ENCODE measurements at regions of chr1 and their contacts with region 1.

Region 1: DNA sequence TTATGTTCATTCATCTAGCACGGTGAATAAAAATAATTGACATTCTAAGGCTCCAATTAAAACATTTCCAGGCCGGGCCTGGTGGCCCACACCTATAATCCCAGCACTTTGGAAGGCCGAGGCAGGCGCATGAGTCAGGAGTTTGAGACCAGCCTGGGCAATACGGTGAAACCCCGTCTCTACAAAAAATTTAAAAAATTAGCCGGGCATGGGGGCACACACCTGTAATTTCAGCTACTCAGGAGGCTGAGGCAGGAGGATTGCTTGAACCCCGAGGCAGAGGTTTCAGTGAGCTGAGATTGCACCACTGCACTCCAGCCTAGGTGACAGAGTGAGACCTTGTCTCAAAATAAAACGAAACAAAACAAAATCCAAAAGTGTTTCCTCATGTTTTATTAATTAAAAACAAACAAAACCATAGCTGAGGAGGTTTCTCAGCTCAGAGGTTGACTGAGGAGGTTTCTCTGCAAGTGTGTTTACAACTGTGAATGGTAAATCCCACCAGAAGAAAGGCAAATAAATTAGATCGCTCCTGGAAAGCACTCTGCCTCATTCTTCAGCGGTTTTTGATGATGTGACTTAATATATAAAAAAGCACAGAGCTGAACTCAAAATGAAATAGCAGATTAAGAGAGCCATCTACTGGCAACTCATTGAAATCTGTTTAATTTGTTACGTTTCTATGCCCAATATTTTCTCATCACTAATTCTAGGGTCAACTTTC is 37.7 kb upstream of the ATG4C start:
- DNase-seq: no peak
- ATAC-seq: no peak
- H3K4me3 Mint-ChIP-seq: no peak overlapping the region
- H3K27ac Mint-ChIP-seq: no peak overlapping the region
- H3K4me1 Mint-ChIP-seq: no peaks in the 10 kb centered on the region
- H3K27me3 Mint-ChIP-seq: peaks cover 19% of the 10 kb centered on the region

Region 2: GRCh38 chr1:62175568-62176179 is 570.6 kb before region 1 on chr1:
- CTCF ChIA-PET with region 1: interaction called, 20 read pairs
- POLR2A ChIA-PET with region 1: no interaction called
- DNase-seq: peak; percentile 58
- ATAC-seq: no peak
- H3K4me3 Mint-ChIP-seq: no peak overlapping the region
- H3K27ac Mint-ChIP-seq: no peak overlapping the region
- H3K4me1 Mint-ChIP-seq: no peaks in the 10 kb centered on the region
- H3K27me3 Mint-ChIP-seq: no peaks in the 10 kb centered on the region

Region 3: GRCh38 chr1:62508187-62508758 is 238.0 kb before region 1 on chr1:
- CTCF ChIA-PET with region 1: interaction called, 52 read pairs
- POLR2A ChIA-PET with region 1: no interaction called
- DNase-seq: peak; percentile 28
- ATAC-seq: no peak
- H3K4me3 Mint-ChIP-seq: no peak overlapping the region
- H3K27ac Mint-ChIP-seq: no peak overlapping the region
- H3K4me1 Mint-ChIP-seq: no peaks in the 10 kb centered on the region
- H3K27me3 Mint-ChIP-seq: no peaks in the 10 kb centered on the region

Region 4: GRCh38 chr1:62643283-62643682 is 103.0 kb before region 1 on chr1:
- CTCF ChIA-PET with region 1: no interaction called
- POLR2A ChIA-PET with region 1: no interaction called
- DNase-seq: no peak
- ATAC-seq: no peak
- H3K4me3 Mint-ChIP-seq: no peak overlapping the region
- H3K27ac Mint-ChIP-seq: no peak overlapping the region
- H3K4me1 Mint-ChIP-seq: no peaks in the 10 kb centered on the region
- H3K27me3 Mint-ChIP-seq: no peaks in the 10 kb centered on the region

Region 5: DNA sequence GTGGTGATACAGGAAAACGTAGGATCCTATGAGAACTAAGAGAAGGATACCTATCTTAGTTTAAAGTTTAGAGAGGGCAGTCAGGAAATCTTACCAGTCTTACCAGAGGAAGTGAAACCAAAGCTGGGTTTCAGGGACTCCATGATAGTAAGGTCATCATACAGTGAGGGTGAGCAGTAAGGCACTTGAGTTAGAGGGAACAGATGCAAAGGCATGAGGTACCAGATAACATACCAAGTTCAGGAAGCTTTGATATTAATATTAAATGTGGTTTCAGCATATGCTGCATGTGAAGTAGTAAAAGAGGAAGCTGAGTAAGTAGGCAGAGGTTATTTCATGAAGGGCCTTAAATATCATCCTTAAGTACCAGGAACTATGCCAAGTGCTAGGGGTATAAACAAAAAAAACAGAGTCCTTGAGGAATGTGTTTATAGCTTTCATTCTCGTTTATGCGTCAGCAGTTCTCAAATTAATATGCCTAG is 54.6 kb after region 1 on chr1:
- CTCF ChIA-PET with region 1: no interaction called
- POLR2A ChIA-PET with region 1: no interaction called
- DNase-seq: no peak
- ATAC-seq: peak; percentile 73
- H3K4me3 Mint-ChIP-seq: no peak overlapping the region
- H3K27ac Mint-ChIP-seq: no peak overlapping the region
- H3K4me1 Mint-ChIP-seq: peaks cover 13% of the 10 kb centered on the region
- H3K27me3 Mint-ChIP-seq: no peaks in the 10 kb centered on the region